ENCODE measurements at regions of chr10 and their contacts with region 1.

Region 1: DNA sequence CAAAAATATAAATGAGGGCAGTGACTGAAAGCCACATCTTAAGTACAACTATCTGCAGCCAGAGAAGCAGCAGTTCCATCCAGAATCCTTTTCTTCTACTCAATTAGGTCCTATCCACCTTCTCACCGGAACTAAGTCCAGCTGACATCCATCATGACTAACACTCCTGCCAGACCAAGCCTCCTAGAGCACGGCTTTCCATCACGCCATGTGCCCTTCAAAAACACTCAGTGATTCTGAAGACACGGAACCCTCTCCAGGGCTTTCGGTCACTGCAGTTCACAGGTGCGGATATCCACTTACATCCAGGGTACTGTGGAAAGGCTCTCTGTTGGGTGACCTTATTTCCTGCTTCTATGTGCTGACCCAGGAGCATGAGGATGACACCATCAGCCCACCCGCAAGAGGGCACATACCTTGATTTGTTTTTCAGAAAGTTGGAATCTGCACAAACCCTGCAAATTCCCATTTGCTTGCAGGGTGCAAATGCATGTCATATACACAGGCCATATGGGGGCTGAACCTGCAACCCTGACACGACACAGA is 64.3 kb downstream of the FAM171A1 start:
- DNase-seq: no peak
- ATAC-seq: no peak
- H3K4me3 ChIP-seq: no peak overlapping the region
- H3K27ac ChIP-seq: no peak overlapping the region
- H3K4me1 ChIP-seq: no peaks in the 10 kb centered on the region
- H3K27me3 ChIP-seq: no peaks in the 10 kb centered on the region
- CTCF ChIP-seq: no peak
- POLR2A ChIP-seq: no peak
- RAD21 ChIP-seq: no peak

Region 2: DNA sequence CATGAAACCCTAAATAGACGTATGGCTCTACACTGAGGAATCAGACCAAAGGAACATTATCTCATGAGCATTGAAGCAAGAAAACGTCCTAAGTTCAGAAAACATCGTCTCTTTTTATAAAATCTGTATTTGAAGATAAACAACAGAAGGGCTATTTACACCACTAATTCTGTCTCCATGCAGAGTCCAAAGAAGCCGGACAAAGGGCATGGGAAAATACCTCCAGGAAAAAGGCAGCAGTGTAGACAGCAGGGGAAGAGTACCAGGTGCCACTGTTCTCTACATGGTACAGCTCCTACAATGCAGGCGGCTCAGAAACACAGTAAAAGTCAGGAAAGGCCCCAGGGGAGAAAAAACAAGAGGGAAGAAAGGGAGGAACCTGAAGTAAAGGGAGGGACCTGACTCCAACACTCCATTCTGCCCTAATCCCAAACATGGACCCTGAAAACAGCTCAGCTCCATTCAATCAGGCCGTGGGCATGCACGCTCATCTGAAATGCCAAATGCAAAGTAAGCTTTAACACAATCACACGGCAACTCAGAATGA is 46.7 kb after region 1 on chr10:
- CTCF ChIA-PET with region 1: no interaction called
- POLR2A ChIA-PET with region 1: no interaction called
- dilution Hi-C with region 1: no loop called
- in situ Hi-C with region 1: no loop called
- intact Hi-C with region 1: loop called (anchors 1 kb)
- DNase-seq: no peak
- ATAC-seq: no peak
- H3K4me3 ChIP-seq: no peak overlapping the region
- H3K27ac ChIP-seq: no peak overlapping the region
- H3K4me1 ChIP-seq: peaks cover 1% of the 10 kb centered on the region; the same call in 1 of the 2 replicates
- H3K27me3 ChIP-seq: no peaks in the 10 kb centered on the region
- CTCF ChIP-seq: no peak
- POLR2A ChIP-seq: no peak
- RAD21 ChIP-seq: no peak